ENCODE measurements at regions of chr19 and their contacts with region 1.

Region 1: DNA sequence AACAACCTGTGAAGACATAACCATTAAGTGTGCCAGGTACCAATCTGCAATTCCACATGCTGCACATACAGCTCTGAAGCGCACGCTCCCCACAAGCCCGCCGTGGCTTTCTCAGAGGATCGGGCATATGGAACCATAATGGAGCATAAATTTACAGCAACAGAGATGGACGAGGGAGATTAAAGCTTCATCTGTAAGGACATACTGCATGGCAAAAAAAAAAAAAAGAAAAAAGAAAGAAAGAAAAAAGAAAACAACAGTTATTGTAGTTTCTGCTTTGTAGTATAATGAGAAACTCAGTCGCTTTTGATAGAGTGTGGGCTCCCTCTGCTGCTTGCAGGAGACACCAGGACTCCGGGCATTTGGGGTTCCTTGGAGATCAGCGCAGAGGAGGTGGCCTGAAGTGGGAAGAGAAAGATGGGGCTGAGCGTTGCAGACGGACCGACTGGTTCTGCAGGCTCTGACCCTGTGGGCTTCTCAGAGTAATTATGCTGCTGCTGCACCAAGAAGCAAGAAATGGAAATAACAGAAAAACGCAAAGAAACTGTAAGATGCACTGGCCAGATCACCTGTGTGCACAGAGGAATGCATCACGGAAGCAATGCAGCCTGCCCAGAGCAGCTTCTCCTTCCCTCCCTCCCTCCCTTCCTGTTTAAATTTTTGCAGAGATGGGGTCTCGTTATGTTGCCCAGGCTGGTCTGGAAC is 10.8 kb upstream of the PDCD5 start:
- DNase-seq: no peak
- ATAC-seq: peak; percentile 84
- H3K4me3 ChIP-seq: no peak overlapping the region
- H3K27ac ChIP-seq: no peak overlapping the region
- H3K4me1 ChIP-seq: no peaks in the 10 kb centered on the region
- H3K27me3 ChIP-seq: no peaks in the 10 kb centered on the region
- CTCF ChIP-seq: peak; percentile 63 to 83 (median 70)
- EP300 ChIP-seq: no peak
- POLR2A ChIP-seq: no peak
- RAD21 ChIP-seq: peak; percentile 93

Region 2: GRCh38 chr19:30669329-30670010 is 1900.8 kb before region 1 on chr19:
- CTCF ChIA-PET with region 1: no interaction called
- POLR2A ChIA-PET with region 1: no interaction called
- RAD21 ChIA-PET with region 1: no interaction called
- SMC1A ChIA-PET with region 1: interaction called, 3 read pairs
- in situ Hi-C with region 1: loop called (anchors 5 kb)
- intact Hi-C with region 1: no loop called
- DNase-seq: no peak
- ATAC-seq: peak; percentile 63
- H3K4me3 ChIP-seq: no peak overlapping the region
- H3K27ac ChIP-seq: no peak overlapping the region
- H3K4me1 ChIP-seq: no peaks in the 10 kb centered on the region
- H3K27me3 ChIP-seq: no peaks in the 10 kb centered on the region
- CTCF ChIP-seq: peak; percentile 64 to 68 (median 65)
- EP300 ChIP-seq: no peak
- POLR2A ChIP-seq: no peak
- RAD21 ChIP-seq: peak; percentile 57

Region 3: DNA sequence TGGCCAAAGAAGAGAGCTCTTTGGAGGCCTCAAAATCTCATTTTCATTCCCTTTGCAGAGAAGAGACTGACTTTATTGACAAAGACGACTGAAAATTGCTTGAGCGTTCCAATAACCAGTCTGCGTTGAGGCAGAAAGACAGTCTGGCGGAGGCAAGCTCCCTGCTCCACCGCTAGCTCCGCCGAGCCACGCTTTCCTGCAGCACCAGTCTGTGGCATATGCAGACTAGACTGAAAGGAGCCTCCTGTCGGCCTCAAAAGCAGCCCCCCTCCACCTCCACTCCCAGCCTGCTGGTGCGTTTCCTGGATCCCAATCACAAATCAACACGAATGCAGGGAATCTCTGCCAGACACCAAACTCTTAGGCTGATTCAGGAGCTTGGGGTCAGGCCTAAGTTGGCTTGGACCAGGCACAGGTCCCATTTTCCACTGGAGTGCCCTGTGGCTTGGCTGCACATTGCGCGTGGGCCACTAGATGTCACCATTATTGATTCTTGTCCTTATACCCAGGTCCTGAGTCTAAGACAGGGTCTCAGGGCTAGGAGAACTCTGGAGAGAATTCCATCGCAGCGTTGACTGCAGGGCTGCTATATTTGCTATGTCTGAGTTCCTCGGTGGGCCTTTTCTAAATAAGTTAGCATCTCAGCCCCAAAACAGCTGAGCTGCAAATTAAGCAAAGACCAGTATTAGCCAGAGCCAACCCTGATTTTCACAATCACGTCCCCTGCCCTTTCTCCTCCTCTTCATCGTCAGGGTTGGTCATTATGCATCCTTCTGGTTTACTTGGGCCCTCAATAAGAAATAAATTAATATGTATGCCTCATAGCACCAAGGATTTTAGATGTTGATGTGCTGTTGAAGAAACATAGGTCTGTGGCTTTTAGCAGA is 230.0 kb before region 1 on chr19:
- CTCF ChIA-PET with region 1: interaction called, 6 read pairs
- POLR2A ChIA-PET with region 1: no interaction called
- RAD21 ChIA-PET with region 1: interaction called, 3 read pairs
- SMC1A ChIA-PET with region 1: interaction called, 4 read pairs
- in situ Hi-C with region 1: loop called (anchors 10 kb)
- intact Hi-C with region 1: loop called (anchors 1 kb)
- DNase-seq: no peak
- ATAC-seq: peak; percentile 95
- H3K4me3 ChIP-seq: no peak overlapping the region
- H3K27ac ChIP-seq: no peak overlapping the region
- H3K4me1 ChIP-seq: no peaks in the 10 kb centered on the region
- H3K27me3 ChIP-seq: no peaks in the 10 kb centered on the region
- CTCF ChIP-seq: peak; percentile 71 to 72 (median 71); a peak in 5 of 6 replicates
- EP300 ChIP-seq: no peak
- POLR2A ChIP-seq: no peak
- RAD21 ChIP-seq: peak; percentile 40

Region 4: DNA sequence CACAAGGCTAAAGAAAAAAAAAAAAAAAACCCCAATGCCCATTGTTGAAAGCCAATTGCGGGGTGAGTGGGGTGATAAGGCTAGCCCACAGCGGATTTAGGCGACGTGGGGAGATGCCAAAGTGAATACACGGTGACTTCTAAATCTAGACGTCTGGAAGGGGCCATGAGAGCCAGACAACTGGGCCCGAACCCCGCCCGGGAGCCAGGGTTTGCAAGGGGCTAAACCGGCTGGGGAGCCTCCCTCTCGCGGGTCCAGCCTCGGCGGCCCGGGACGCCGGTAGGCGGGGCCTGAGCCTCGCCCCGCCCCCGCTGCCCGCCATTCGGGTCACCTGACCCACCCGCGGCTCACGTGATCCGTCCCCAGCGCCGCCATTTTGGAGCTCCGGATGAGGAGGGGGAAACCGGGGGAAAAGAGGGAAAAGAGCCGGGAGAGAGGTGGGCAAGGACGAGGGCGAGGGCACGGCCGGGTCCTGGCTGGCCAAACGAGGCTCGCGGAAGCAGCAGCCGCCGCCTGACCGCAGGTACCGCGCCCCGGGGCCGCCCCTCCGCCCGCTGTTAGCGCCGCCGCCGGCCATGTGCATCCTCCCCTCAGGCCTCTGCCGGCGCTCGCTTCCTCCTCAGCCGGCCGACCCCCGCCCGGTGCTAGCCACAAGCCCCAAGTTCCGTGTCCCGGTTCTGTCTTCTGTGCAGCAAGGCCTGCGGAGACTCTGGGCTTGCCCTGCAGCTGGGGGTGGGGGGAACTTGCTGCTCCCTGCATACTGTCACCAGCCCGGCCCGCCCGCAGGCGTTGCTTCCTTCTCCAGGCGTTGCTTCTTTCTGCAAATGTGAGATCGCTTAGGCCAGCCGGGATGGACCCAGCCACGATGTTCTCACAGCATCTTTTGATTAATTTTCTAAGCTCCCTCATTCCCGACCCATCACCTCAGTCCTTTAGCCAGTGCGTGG is 224.7 kb before region 1 on chr19 and contains the start of gene ZNF507:
- CTCF ChIA-PET with region 1: interaction called, 3 read pairs
- POLR2A ChIA-PET with region 1: no interaction called
- RAD21 ChIA-PET with region 1: no interaction called
- SMC1A ChIA-PET with region 1: no interaction called
- in situ Hi-C with region 1: loop called (anchors 10 kb)
- intact Hi-C with region 1: loop called (anchors 1 kb)
- DNase-seq: no peak
- ATAC-seq: peak; percentile 93
- H3K4me3 ChIP-seq: peak within 1 kb of the TSS; percentile 81
- H3K27ac ChIP-seq: peak within 1 kb of the TSS; percentile 79
- H3K4me1 ChIP-seq: peaks cover 4% of the 10 kb centered on the region; the same call in 1 of the 2 replicates
- H3K27me3 ChIP-seq: no peaks in the 10 kb centered on the region
- CTCF ChIP-seq: 0 out of 6 replicates have a peak, but pooled peaks of 1 of the 3 experiments have one; percentile 6
- EP300 ChIP-seq: no peak
- POLR2A ChIP-seq: peak; percentile 62
- RAD21 ChIP-seq: no peak
- polyA plus RNA-seq, gene ZNF507: 2.3 to 2.7 TPM

Region 5: DNA sequence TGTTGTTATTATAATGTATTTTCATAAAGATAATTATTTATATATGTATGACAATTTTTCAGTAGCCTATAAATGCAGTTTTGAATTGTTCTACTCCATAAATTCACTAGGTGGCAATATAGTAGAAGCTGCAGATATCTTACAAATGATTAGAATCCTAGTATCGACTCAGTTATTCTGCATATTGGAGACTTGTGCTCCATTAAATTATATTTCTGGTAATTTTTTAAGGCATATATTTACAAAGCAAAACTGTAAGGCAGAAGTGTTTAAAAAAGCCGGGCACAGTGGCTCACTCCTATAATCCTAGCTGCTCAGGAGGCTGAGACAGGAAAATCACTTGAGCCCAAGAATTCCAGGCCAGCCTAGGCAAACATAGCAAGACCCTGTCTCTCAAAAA is 106.0 kb before region 1 on chr19:
- CTCF ChIA-PET with region 1: interaction called, 15 read pairs
- POLR2A ChIA-PET with region 1: no interaction called
- RAD21 ChIA-PET with region 1: interaction called, 4 read pairs
- SMC1A ChIA-PET with region 1: no interaction called
- in situ Hi-C with region 1: no loop called
- intact Hi-C with region 1: no loop called
- DNase-seq: no peak
- ATAC-seq: no peak
- H3K4me3 ChIP-seq: no peak overlapping the region
- H3K27ac ChIP-seq: no peak overlapping the region
- H3K4me1 ChIP-seq: peaks cover 5% of the 10 kb centered on the region
- H3K27me3 ChIP-seq: no peaks in the 10 kb centered on the region
- CTCF ChIP-seq: peak in 1 of 3 experiments; percentile 17; a peak in 2 of 6 replicates
- EP300 ChIP-seq: no peak
- POLR2A ChIP-seq: no peak
- RAD21 ChIP-seq: no peak; the same call in 1 of the 2 replicates

Region 6: GRCh38 chr19:32471095-32471494 is 99.1 kb before region 1 on chr19:
- CTCF ChIA-PET with region 1: interaction called, 15 read pairs
- POLR2A ChIA-PET with region 1: no interaction called
- RAD21 ChIA-PET with region 1: no interaction called
- SMC1A ChIA-PET with region 1: no interaction called
- in situ Hi-C with region 1: no loop called
- intact Hi-C with region 1: loop called (anchors 5 kb)
- DNase-seq: no peak
- ATAC-seq: no peak
- H3K4me3 ChIP-seq: no peak overlapping the region
- H3K27ac ChIP-seq: no peak overlapping the region
- H3K4me1 ChIP-seq: no peaks in the 10 kb centered on the region
- H3K27me3 ChIP-seq: no peaks in the 10 kb centered on the region
- CTCF ChIP-seq: no peak
- EP300 ChIP-seq: no peak
- POLR2A ChIP-seq: no peak
- RAD21 ChIP-seq: no peak